ENCODE measurements at regions of chr17 and their contacts with region 1.

Region 1: DNA sequence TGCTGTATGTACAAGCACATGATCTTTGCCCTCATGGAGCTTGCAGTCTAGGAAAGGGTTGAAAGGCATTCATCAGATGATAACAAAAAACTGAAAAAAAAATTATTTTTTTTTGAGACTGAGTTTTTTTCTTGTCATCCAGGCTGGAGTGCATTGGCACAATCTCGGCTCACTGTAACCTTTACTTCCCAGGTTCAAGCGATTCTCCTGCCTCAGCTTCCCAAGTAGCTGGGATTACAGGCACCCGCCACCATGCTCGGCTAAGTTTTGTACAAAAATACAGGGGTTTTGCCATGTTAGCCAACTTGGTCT is 38.7 kb upstream of the BCAS3 start:
- DNase-seq: no peak
- ATAC-seq: no peak
- H3K4me3 ChIP-seq: no peak overlapping the region
- H3K4me3 Mint-ChIP-seq: no peak overlapping the region
- H3K27ac ChIP-seq: no peak overlapping the region
- H3K27ac Mint-ChIP-seq: no peak overlapping the region
- H3K4me1 ChIP-seq: no peaks in the 10 kb centered on the region
- H3K4me1 Mint-ChIP-seq: peaks cover 7% of the 10 kb centered on the region
- H3K27me3 ChIP-seq: no peaks in the 10 kb centered on the region
- H3K27me3 Mint-ChIP-seq: no peaks in the 10 kb centered on the region
- CTCF ChIP-seq: no peak

Region 2: GRCh38 chr17:60421273-60421934 is 217.6 kb before region 1 on chr17:
- CTCF ChIA-PET with region 1: interaction called, 5 read pairs
- POLR2A ChIA-PET with region 1: no interaction called
- intact Hi-C with region 1: loop called (anchors 1 kb)
- DNase-seq: peak; percentile 50 to 84 (median 71)
- ATAC-seq: peak; percentile 93
- H3K4me3 ChIP-seq: peak overlapping the region; percentile 52 to 60
- H3K4me3 Mint-ChIP-seq: peak overlapping the region; percentile 83
- H3K27ac ChIP-seq: peak overlapping the region; percentile 24 to 40
- H3K27ac Mint-ChIP-seq: peak overlapping the region; percentile 72
- H3K4me1 ChIP-seq: peaks cover 8% of the 10 kb centered on the region
- H3K4me1 Mint-ChIP-seq: peaks cover 6% of the 10 kb centered on the region
- H3K27me3 ChIP-seq: no peaks in the 10 kb centered on the region
- H3K27me3 Mint-ChIP-seq: peaks cover 2% of the 10 kb centered on the region
- CTCF ChIP-seq: peak; percentile 100

Region 3: DNA sequence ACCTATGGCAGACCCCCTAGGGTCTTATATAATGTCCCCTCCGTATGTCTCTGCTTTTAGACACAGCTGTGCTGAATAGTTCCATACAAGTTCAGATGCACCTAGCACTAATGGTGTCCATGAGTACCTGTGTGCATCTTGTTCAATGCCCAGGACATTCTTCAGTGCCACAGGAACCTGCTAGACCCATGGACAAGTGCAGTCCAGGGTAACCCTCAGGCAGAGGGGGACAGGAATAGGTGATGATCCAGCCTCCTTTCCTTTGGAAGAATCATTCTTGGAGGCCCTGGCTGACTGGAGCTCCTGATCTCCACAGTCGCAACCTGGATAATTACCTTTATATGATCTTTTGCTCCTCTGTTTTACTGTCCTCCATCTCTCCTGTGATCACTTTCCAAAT is 67.4 kb before region 1 on chr17:
- CTCF ChIA-PET with region 1: interaction called, 11 read pairs
- POLR2A ChIA-PET with region 1: no interaction called
- intact Hi-C with region 1: no loop called
- DNase-seq: no peak
- ATAC-seq: no peak
- H3K4me3 ChIP-seq: no peak overlapping the region
- H3K4me3 Mint-ChIP-seq: no peak overlapping the region
- H3K27ac ChIP-seq: no peak overlapping the region
- H3K27ac Mint-ChIP-seq: no peak overlapping the region
- H3K4me1 ChIP-seq: no peaks in the 10 kb centered on the region
- H3K4me1 Mint-ChIP-seq: no peaks in the 10 kb centered on the region
- H3K27me3 ChIP-seq: no peaks in the 10 kb centered on the region
- H3K27me3 Mint-ChIP-seq: peaks cover 3% of the 10 kb centered on the region
- CTCF ChIP-seq: no peak

Region 4: DNA sequence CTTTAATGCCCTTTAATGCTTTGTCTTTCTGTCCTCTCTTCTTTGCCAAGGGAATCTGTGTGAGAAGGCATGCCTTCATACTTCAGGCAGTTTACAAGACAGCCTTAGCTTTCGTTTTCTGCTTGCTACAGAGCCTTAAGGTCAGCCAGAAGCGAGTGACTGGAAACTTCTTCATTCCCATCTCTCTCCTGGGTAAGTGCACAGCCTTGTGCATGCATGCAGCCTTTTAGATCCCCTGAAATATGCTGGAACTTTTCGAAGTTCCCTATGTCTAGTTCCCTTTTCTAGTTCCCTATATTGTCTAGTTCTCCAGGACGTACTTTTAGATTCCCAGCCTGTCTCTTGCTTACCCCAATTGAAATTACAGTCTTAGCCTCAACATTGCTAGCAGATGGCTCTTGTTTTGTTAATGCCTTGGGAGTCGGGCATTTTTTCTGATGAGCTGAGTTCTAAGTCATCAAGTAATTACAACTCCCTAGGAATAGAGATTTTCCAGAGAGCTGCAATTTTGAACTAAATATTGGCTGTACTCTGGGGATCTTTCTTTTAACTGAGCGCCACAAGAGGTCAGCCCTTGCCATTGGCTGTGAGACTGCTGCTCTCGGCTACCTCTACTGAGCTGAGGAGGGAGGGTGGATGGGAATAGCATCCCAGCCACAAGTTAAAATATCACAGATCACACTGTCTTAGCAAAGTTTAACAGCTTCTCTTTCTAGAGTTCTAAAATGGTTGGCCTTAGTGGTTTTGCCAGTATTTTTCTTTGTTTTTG is 61.6 kb before region 1 on chr17:
- CTCF ChIA-PET with region 1: interaction called, 10 read pairs
- POLR2A ChIA-PET with region 1: interaction called, 3 read pairs
- intact Hi-C with region 1: loop called in 1 of 2 experiments (anchors 1 kb)
- DNase-seq: peak in 2 of 9 experiments; percentile 21 to 40
- ATAC-seq: no peak
- H3K4me3 ChIP-seq: peak overlapping the region; percentile 16 to 39
- H3K4me3 Mint-ChIP-seq: peak overlapping the region; percentile 77
- H3K27ac ChIP-seq: no peak overlapping the region
- H3K27ac Mint-ChIP-seq: no peak overlapping the region
- H3K4me1 ChIP-seq: no peaks in the 10 kb centered on the region
- H3K4me1 Mint-ChIP-seq: peaks cover 8% of the 10 kb centered on the region
- H3K27me3 ChIP-seq: no peaks in the 10 kb centered on the region
- H3K27me3 Mint-ChIP-seq: no peaks in the 10 kb centered on the region
- CTCF ChIP-seq: no peak

Region 5: GRCh38 chr17:60599620-60600489 is 39.1 kb before region 1 on chr17 and contains the start of gene PPM1D:
- CTCF ChIA-PET with region 1: interaction called, 12 read pairs
- POLR2A ChIA-PET with region 1: interaction called, 3 read pairs
- intact Hi-C with region 1: loop called in 1 of 2 experiments (anchors 2 kb)
- DNase-seq: peak; percentile 92 to 99 (median 98)
- ATAC-seq: peak; percentile 93
- H3K4me3 ChIP-seq: peak within 1 kb of the TSS; percentile 84 to 97
- H3K4me3 Mint-ChIP-seq: peak within 1 kb of the TSS; percentile 94
- H3K27ac ChIP-seq: peak within 1 kb of the TSS; percentile 76 to 96
- H3K27ac Mint-ChIP-seq: peak within 1 kb of the TSS; percentile 94
- H3K4me1 ChIP-seq: peaks cover 11% of the 10 kb centered on the region
- H3K4me1 Mint-ChIP-seq: peaks cover 38% of the 10 kb centered on the region
- H3K27me3 ChIP-seq: no peaks in the 10 kb centered on the region
- H3K27me3 Mint-ChIP-seq: no peaks in the 10 kb centered on the region
- CTCF ChIP-seq: no peak
- total RNA-seq, gene PPM1D: 21.0 to 21.1 TPM

Region 6: GRCh38 chr17:60613325-60613724 is 25.6 kb before region 1 on chr17:
- CTCF ChIA-PET with region 1: interaction called, 17 read pairs
- POLR2A ChIA-PET with region 1: no interaction called
- intact Hi-C with region 1: no loop called
- DNase-seq: no peak
- ATAC-seq: no peak
- H3K4me3 ChIP-seq: no peak overlapping the region
- H3K4me3 Mint-ChIP-seq: no peak overlapping the region
- H3K27ac ChIP-seq: no peak overlapping the region
- H3K27ac Mint-ChIP-seq: no peak overlapping the region
- H3K4me1 ChIP-seq: no peaks in the 10 kb centered on the region
- H3K4me1 Mint-ChIP-seq: peaks cover 39% of the 10 kb centered on the region
- H3K27me3 ChIP-seq: no peaks in the 10 kb centered on the region
- H3K27me3 Mint-ChIP-seq: no peaks in the 10 kb centered on the region
- CTCF ChIP-seq: no peak

Region 7: GRCh38 chr17:61750656-61751055 is 1111.7 kb after region 1 on chr17:
- CTCF ChIA-PET with region 1: no interaction called
- POLR2A ChIA-PET with region 1: no interaction called
- intact Hi-C with region 1: no loop called
- DNase-seq: no peak
- ATAC-seq: no peak
- H3K4me3 ChIP-seq: no peak overlapping the region
- H3K4me3 Mint-ChIP-seq: no peak overlapping the region
- H3K27ac ChIP-seq: no peak overlapping the region
- H3K27ac Mint-ChIP-seq: no peak overlapping the region
- H3K4me1 ChIP-seq: no peaks in the 10 kb centered on the region
- H3K4me1 Mint-ChIP-seq: no peaks in the 10 kb centered on the region
- H3K27me3 ChIP-seq: no peaks in the 10 kb centered on the region
- H3K27me3 Mint-ChIP-seq: no peaks in the 10 kb centered on the region
- CTCF ChIP-seq: no peak